ENCODE measurements at regions of chrX and their contacts with region 1.

Region 1: DNA sequence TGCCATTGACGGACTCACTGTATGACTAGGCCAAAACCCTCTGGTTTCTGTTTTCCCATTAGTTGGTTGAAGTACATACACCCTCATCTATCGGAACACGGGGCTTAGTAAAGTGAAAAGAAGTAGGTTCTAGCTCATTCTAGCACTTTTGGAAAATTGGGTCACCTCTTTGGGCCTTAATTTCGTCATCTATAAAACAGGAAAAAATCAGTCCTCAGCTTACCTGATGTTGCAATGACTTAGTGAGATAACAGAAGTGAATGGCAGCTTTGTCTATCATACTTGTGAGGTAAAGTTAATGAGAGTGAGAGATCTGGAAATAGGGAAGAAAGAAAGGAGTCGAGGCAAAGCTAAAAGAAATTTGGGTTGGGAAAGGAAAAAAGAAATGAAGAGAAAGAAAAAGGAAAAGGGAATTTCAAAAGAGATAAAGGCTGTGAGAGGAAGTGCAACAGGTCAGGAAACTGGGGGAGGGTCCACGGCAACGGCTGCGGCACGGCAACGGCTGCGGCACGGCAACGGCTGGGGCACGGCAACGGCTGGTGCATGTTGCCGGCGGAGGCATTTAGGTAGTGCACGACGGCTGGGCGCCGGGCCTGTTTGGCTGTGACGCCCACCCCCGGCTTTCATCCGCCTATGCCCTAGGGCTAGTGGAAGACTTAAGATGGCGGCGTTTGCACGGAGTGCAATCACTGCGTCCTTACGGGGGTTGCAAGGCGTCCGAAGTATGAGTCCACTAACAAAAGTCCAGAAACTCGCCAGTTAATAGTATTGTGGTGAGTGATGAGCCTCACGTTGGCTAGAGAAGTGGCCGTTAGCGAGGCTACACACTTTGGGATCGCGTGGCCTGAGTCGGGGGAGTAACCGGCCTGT is 360.1 kb upstream of the ZCCHC13 start:
- DNase-seq: peak; percentile 68
- ATAC-seq: peak; percentile 99
- H3K4me3 Mint-ChIP-seq: peak overlapping the region; percentile 95
- H3K27ac Mint-ChIP-seq: peak overlapping the region; percentile 94
- H3K4me1 Mint-ChIP-seq: peaks cover 21% of the 10 kb centered on the region
- H3K27me3 Mint-ChIP-seq: no peaks in the 10 kb centered on the region
- CTCF ChIP-seq: no peak

Region 2: GRCh38 chrX:72572248-72573157 is 1371.4 kb before region 1 on chrX and contains the start of gene HDAC8:
- CTCF ChIA-PET with region 1: no interaction called
- POLR2A ChIA-PET with region 1: no interaction called
- intact Hi-C with region 1: loop called (anchors 2 kb)
- DNase-seq: peak; percentile 16
- ATAC-seq: peak; percentile 84
- H3K4me3 Mint-ChIP-seq: peak within 1 kb of the TSS; percentile 98
- H3K27ac Mint-ChIP-seq: peak within 1 kb of the TSS; percentile 84
- H3K4me1 Mint-ChIP-seq: peaks cover 7% of the 10 kb centered on the region
- H3K27me3 Mint-ChIP-seq: peaks cover 4% of the 10 kb centered on the region
- CTCF ChIP-seq: no peak
- total RNA-seq, gene HDAC8: 29.0 and 39.6 TPM in 2 replicates

Region 3: GRCh38 chrX:73562984-73563737 is 380.8 kb before region 1 on chrX and contains the start of gene CHIC1:
- CTCF ChIA-PET with region 1: no interaction called
- POLR2A ChIA-PET with region 1: no interaction called
- intact Hi-C with region 1: loop called (anchors 1 kb)
- DNase-seq: peak; percentile 51
- ATAC-seq: peak; percentile 73
- H3K4me3 Mint-ChIP-seq: peak within 1 kb of the TSS; percentile 97
- H3K27ac Mint-ChIP-seq: peak within 1 kb of the TSS; percentile 99
- H3K4me1 Mint-ChIP-seq: peaks cover 27% of the 10 kb centered on the region
- H3K27me3 Mint-ChIP-seq: no peaks in the 10 kb centered on the region
- CTCF ChIP-seq: no peak
- total RNA-seq, gene CHIC1: 12.9 and 14.0 TPM in 2 replicates